ENCODE measurements at regions of chr7 and their contacts with region 1.

Region 1: GRCh38 chr7:39145935-39146334 is 168.2 kb downstream of the POU6F2 start:
- DNase-seq: no peak
- H3K4me3 ChIP-seq: no peak overlapping the region
- H3K27ac ChIP-seq: no peak overlapping the region
- H3K4me1 ChIP-seq: no peaks in the 10 kb centered on the region
- H3K27me3 ChIP-seq: no peaks in the 10 kb centered on the region
- CTCF ChIP-seq: no peak
- POLR2A ChIP-seq: no peak

Region 2: DNA sequence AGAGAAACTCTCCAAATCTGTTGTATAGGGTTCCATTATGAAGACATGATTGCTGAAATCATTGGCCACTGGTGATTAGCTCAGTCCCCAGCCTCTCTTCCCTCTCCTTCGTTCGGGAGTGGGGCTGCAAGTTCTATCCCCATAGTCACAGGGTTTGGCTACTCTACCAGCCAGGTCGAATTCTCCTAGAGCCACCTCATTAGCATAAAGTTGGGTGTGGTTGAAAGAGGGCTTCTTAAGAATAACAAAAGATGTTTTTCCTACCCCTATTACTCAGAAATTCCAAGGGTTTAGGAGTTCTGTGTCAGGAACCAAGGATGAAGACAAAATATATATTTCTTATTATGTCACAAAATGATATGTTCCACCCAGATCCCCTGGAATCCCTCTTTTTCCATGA is 254.1 kb after region 1 on chr7:
- intact Hi-C with region 1: loop called (anchors 2 kb)
- DNase-seq: no peak
- H3K4me3 ChIP-seq: no peak overlapping the region
- H3K27ac ChIP-seq: no peak overlapping the region
- H3K4me1 ChIP-seq: no peaks in the 10 kb centered on the region
- H3K27me3 ChIP-seq: no peaks in the 10 kb centered on the region
- CTCF ChIP-seq: no peak
- POLR2A ChIP-seq: no peak

Measured in vagina (tissue), 2 donors.